ENCODE measurements at regions of chr1 and their contacts with region 1.

Region 1: GRCh38 chr1:48061162-48062136 is 64.3 kb upstream of the TRABD2B start:
- DNase-seq: peak; percentile 47 to 76
- H3K4me3 ChIP-seq: no peak overlapping the region
- H3K27ac ChIP-seq: no peak overlapping the region
- H3K4me1 ChIP-seq: peaks cover 0 to 6% (median 1%) of the 10 kb centered on the region in 4 experiments; a peak in 3 of 7 replicates
- H3K27me3 ChIP-seq: peaks cover 0 to 3% (median 0%) of the 10 kb centered on the region in 4 experiments; a peak in 1 of 7 replicates
- CTCF ChIP-seq: peak in 2 of 3 experiments; percentile 72 to 75; a peak in 3 of 4 replicates
- EP300 ChIP-seq: no peak
- POLR2A ChIP-seq: no peak
- RAD21 ChIP-seq: peak; percentile 76 to 83

Region 2: DNA sequence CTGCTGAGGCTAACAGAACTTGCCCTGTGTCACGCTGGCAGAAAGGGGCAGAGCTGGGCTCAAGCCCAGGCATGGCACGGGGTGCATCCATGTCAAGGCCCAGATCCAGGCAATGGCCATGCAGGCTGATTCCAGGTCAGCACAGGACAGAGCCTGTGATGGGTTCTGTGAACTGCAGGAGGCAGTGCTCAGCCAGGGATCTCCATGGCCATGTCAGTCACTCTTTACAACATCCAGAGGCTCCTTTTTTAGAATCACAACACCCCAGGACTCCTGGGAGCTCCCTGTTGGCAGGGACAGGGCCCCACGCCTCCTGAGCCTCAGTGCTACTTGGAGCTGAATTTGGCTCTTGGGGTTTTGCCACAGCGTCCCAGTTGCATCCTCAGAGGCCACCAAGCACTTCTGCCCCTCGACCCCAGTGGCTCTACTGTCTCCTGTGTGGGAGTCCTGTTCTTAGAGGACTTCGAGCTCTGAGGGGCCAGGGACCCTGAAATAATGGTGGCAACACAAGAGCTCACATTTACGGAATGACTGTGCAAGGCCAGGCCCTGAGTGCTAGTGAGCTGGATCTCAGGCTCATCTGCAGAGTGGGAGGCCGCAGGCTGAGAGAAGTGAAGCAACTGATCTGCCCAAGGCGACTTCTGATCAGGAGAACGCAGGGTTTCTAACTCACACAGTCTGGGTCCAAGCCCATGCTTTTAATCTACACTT is 275.7 kb before region 1 on chr1:
- CTCF ChIA-PET with region 1: interaction called, 14 read pairs
- POLR2A ChIA-PET with region 1: no interaction called
- DNase-seq: peak; percentile 10 to 53
- H3K4me3 ChIP-seq: no peak overlapping the region
- H3K27ac ChIP-seq: no peak overlapping the region
- H3K4me1 ChIP-seq: peaks cover 0 to 3% (median 0%) of the 10 kb centered on the region in 4 experiments; a peak in 3 of 7 replicates
- H3K27me3 ChIP-seq: no peaks in the 10 kb centered on the region
- CTCF ChIP-seq: peak; percentile 74 to 84 (median 75)
- EP300 ChIP-seq: no peak
- POLR2A ChIP-seq: no peak
- RAD21 ChIP-seq: peak; percentile 81 to 88

Region 3: GRCh38 chr1:47997289-47998200 is 63.9 kb before region 1 on chr1 and contains the start of gene TRABD2B:
- CTCF ChIA-PET with region 1: interaction called, 158 read pairs
- POLR2A ChIA-PET with region 1: interaction called, 12 read pairs
- DNase-seq: peak; percentile 63 to 95
- H3K4me3 ChIP-seq: peak within 1 kb of the TSS; percentile 39 to 86 (median 62)
- H3K27ac ChIP-seq: no peak within 1 kb of the TSS
- H3K4me1 ChIP-seq: peaks cover 5 to 17% (median 13%) of the 10 kb centered on the region in 4 experiments
- H3K27me3 ChIP-seq: peaks cover 0 to 30% (median 25%) of the 10 kb centered on the region in 4 experiments; a peak in 6 of 7 replicates
- CTCF ChIP-seq: peak; percentile 81 to 97 (median 86)
- EP300 ChIP-seq: no peak
- POLR2A ChIP-seq: no peak; a peak in 1 of 3 replicates
- RAD21 ChIP-seq: peak; percentile 79 to 90
- total RNA-seq, gene TRABD2B: 3.4 and 3.5 TPM in 2 replicates

Region 4: DNA sequence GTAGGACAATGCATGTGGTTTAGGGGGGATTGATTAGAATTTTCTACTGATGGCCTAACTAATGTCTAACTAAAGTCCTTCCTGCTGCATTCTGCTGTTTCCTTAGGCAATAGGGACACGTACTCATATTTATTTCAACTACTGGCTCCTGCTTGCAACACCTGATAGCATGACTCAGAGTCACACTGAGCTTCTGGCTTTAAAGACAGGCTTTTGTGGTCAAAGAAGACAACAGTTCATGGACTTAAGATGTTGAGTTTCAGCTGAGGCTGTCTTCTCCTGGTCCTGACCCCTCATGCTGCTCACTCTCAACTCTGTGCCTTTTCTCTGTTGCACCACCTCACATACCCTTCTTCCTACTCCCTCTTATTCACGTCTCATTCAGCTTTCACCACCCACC is 35.2 kb before region 1 on chr1:
- CTCF ChIA-PET with region 1: interaction called, 28 read pairs
- POLR2A ChIA-PET with region 1: no interaction called
- DNase-seq: no peak
- H3K4me3 ChIP-seq: no peak overlapping the region
- H3K27ac ChIP-seq: no peak overlapping the region
- H3K4me1 ChIP-seq: peaks cover 0 to 10% (median 5%) of the 10 kb centered on the region in 4 experiments; a peak in 4 of 7 replicates
- H3K27me3 ChIP-seq: no peaks in the 10 kb centered on the region
- CTCF ChIP-seq: no peak
- EP300 ChIP-seq: no peak
- POLR2A ChIP-seq: no peak
- RAD21 ChIP-seq: no peak

Region 5: DNA sequence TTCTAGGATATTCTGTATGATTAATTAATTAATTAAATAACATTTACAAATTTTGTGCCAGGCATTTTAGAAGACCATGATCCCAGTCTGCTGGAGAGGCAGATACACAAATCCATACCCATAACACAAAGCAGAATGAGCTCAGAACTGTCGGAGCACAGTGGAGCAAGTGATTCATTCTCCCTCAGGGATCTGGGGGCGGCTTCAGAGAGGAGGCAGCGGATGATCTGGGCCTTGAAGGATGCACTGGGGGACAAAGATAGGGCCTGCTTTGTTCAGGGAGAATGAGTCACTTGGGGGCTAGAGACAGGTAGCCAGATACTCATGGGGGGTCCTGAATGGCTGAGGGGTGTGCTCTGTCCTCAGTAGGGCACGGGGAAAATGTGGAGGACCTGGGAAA is 13.4 kb before region 1 on chr1:
- CTCF ChIA-PET with region 1: interaction called, 119 read pairs
- POLR2A ChIA-PET with region 1: interaction called, 3 read pairs
- DNase-seq: no peak
- H3K4me3 ChIP-seq: no peak overlapping the region
- H3K27ac ChIP-seq: no peak overlapping the region
- H3K4me1 ChIP-seq: peaks cover 0 to 5% (median 1%) of the 10 kb centered on the region in 4 experiments; a peak in 4 of 7 replicates
- H3K27me3 ChIP-seq: no peaks in the 10 kb centered on the region
- CTCF ChIP-seq: no peak
- EP300 ChIP-seq: no peak
- POLR2A ChIP-seq: no peak
- RAD21 ChIP-seq: no peak